Activated CD4-positive, alpha-beta T cell treated with anti-CD3 and anti-CD28 coated beads, Interleukin-2, amount 10 ng/mL, durations not matched to agents 24 days and 14 days (primary cell): ENCODE measurements at regions of chr10 and their contacts with region 1.

Region 1: GRCh38 chr10:11713186-11713743 is 28.9 kb upstream of the ECHDC3 start:
- DNase-seq: no peak
- H3K4me3 Mint-ChIP-seq: no peak overlapping the region
- H3K27ac Mint-ChIP-seq: no peak overlapping the region
- H3K4me1 Mint-ChIP-seq: peaks cover 18% of the 10 kb centered on the region
- H3K27me3 Mint-ChIP-seq: peaks cover 71% of the 10 kb centered on the region

Region 2: DNA sequence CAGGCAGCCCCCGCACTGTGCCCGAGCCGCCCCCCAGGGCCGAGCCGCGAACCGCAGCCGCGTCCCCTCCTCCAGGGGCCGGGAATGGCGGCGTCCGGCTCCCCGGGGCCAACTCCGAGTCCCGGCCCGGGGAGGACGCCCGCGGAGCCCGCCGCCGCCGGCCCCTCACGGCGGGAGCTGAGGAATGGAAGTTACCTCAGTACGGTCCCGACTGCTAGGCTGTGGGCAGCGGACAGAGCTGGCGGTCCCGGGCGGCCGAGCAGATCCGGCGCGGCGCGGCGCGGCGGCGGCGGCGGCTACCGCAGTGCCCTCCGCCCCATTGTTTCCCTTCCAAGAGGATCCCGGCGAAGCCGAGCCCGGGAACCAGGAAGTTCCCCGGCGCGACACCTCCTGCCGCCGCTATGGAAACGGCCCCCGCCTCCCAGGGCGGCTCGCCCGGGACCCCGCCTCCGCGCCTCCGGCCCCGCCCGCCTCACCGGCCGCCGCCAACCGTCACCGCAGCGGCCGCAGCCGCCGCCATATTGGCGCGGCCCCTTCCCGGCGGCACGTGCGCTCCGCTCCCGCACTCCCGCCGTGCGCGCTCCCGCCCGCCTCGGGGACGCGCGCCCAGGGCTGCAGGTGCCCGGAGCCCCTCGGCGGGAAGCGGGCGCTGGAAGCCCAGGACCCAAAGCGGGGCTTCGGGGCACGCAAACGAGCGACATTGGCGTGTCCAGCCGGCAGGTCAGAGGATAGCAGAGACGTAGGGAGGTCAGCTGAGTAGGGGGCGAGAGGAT is 101.8 kb before region 1 on chr10 and contains the start of gene USP6NL:
- intact Hi-C with region 1: loop called (anchors 5 kb)
- DNase-seq: peak; percentile 90
- H3K4me3 Mint-ChIP-seq: peak within 1 kb of the TSS; percentile 85
- H3K27ac Mint-ChIP-seq: peak within 1 kb of the TSS; percentile 72
- H3K4me1 Mint-ChIP-seq: peaks cover 18% of the 10 kb centered on the region
- H3K27me3 Mint-ChIP-seq: peaks cover 57% of the 10 kb centered on the region
- total RNA-seq, gene USP6NL: 0.83 and 0.84 TPM in 2 replicates

Region 3: GRCh38 chr10:11742005-11742778 is 28.9 kb after region 1 on chr10 and contains the start of gene ECHDC3:
- intact Hi-C with region 1: no loop called
- DNase-seq: peak; percentile 77
- H3K4me3 Mint-ChIP-seq: peak within 1 kb of the TSS; percentile 64
- H3K27ac Mint-ChIP-seq: no peak within 1 kb of the TSS
- H3K4me1 Mint-ChIP-seq: peaks cover 2% of the 10 kb centered on the region
- H3K27me3 Mint-ChIP-seq: peaks cover 43% of the 10 kb centered on the region
- total RNA-seq, gene ECHDC3: 0.35 and 0.47 TPM in 2 replicates